ENCODE measurements at regions of chr17 and their contacts with region 1.

Region 1: DNA sequence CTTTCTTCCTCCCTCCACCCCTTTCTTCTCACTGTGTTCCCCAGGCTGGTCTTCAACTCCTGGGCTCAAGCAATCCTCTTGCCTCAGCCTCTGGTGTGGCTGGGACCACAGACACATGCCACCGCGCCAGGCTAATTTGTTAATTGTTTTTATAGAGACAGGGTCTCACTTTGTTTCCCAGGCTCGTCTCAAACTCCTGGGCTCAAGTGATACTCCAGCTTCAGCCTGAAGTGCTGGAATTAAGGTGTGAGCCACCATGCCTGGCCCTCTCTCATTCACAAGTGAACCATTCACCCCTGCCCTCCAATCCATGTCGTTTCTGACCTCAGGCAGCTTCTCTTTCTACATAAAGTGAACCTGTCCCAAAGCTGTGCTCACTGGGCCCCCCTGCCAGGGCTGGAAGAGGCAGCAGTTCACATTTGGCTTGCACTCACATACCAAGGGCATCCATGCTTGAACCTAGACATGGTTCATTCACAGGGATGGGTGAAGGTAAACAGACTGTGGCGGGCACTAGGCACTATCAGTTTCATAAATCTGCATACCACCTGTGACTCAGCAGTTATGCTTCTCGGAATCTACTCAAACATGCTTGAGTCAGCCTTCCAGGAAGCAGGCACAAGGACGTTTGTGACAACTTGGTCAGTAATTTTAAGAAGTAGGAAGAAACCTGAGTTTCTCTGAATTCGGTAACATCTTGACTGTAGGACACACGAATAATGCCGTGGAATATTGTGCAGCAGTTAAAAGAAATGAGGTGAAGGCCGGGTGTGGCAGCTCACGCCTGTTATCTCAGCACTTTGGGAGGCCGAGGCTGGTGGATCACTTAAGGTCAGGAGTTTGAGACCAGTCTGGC is 6.0 kb upstream of the RNF213 start:
- H3K4me3 Mint-ChIP-seq: peak overlapping the region; percentile 51
- H3K27ac Mint-ChIP-seq: peak overlapping the region; percentile 99
- H3K4me1 Mint-ChIP-seq: peaks cover 72% of the 10 kb centered on the region
- H3K27me3 Mint-ChIP-seq: no peaks in the 10 kb centered on the region

Region 2: DNA sequence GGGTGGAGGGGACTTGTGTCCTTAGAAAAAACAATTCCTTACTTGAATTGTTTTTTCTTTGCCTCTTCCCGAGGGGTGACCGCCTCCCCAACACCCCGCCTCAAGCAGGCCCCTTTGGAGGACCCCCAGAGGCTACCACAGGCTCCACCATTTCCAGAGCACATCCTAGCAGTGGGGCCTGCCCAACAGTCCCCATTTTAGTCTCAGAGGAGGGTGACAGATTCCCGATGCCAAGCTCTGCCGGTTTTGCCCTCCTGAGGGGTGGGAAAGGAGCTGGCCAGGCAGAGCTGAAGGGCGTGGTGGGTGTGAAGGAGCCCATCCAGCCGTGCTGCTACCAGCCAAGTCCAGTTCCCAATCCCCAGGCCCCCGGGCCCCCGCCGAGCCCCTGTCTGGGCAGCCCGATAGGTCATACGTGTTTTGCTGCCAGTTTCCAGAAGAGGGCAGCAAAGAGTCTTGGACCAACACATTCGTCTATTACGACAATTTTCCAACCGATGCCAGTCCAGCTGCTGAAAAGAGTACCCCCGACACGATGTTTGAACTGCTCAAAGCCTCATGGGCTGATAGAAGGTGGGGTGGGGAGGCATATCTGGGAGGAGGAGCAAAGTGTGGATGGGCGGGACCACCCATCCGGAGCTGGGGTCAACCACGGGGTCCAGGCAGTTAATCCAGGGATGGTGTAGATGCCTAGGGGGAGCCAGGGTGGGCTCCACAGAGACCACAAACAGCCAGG is 172.1 kb before region 1 on chr17:
- intact Hi-C with region 1: loop called (anchors 10 kb)
- H3K4me3 Mint-ChIP-seq: no peak overlapping the region
- H3K27ac Mint-ChIP-seq: peak overlapping the region; percentile 69
- H3K4me1 Mint-ChIP-seq: peaks cover 10% of the 10 kb centered on the region
- H3K27me3 Mint-ChIP-seq: peaks cover 19% of the 10 kb centered on the region

Region 3: DNA sequence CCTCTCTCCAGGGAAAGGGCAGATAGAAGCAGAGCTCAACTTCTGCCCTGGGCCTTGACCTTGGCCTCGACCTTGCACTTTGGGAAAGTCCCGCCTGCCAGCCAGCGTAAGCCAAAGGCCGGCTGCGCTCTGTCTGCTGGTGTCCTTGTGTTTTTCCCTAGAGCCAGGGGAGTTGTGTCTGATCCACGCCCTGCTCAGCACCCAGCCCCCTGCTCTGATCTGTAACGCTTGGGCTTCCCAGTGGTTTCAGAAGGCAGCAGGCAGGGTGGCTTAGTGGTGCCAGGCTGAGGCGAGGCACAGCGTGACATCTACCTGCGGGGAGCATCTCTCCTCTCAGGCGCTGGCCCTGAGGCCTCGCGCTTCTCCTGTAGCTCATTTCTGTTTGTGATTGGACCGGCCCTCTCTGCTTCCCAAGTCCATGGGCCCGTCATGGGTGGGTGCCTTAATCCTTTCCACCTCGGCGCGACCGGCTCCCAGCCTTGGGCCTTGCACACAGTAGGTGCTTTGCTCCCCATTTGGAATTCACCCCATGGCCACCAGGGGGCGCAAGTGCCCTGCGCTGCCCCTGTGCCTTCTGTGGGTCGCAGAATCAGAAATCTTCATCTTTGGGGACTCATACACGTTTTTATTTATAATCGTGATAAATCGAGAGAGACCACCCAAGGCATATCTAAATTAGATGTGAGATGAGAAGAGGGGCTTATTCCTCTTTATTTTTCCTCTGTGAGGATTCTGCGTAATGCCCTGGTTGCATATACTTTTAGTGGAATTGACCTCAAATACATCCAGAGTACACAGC is 58.7 kb before region 1 on chr17:
- intact Hi-C with region 1: loop called (anchors 5 kb)
- H3K4me3 Mint-ChIP-seq: no peak overlapping the region
- H3K27ac Mint-ChIP-seq: no peak overlapping the region
- H3K4me1 Mint-ChIP-seq: peaks cover 19% of the 10 kb centered on the region
- H3K27me3 Mint-ChIP-seq: peaks cover 34% of the 10 kb centered on the region

Region 4: DNA sequence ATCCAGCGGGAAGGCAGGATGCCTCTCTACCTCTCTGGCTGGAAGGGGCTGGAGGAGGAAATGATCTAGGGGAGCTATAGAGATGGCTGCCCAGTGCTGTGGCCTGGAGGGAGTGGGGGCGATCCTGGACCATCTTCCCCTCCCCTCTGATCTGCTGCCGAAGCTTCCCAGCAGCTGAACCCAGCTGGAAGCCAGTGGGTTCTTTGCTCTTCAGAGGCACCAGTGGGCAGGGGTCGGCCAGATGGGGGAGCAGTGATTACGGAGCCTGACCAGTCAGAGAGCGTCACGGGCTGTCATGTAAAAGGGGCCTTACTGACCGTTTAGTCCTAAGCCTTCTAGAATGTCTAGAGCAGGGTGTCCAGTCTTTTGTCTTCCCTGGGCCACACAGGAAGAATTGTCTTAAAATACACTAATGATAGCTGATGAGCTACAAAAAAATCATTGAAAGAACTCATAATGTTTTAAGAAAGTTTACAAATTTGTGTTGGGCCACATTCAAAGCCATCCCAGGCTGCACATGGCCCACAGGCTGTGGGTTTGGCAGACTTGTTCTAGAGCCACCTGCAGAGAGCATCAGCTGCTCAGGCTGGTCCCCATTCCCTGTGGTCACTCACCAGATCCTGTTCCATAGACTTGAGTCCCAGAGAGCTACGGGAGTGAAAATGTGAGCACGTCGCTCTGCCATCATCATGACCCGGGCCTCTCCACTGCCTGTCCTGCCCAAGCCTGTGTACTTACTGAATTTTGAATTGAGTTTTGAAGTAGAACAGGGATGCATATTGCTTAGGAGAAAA is 27.7 kb before region 1 on chr17:
- intact Hi-C with region 1: no loop called
- H3K4me3 Mint-ChIP-seq: no peak overlapping the region
- H3K27ac Mint-ChIP-seq: no peak overlapping the region
- H3K4me1 Mint-ChIP-seq: peaks cover 22% of the 10 kb centered on the region
- H3K27me3 Mint-ChIP-seq: peaks cover 26% of the 10 kb centered on the region

Region 5: DNA sequence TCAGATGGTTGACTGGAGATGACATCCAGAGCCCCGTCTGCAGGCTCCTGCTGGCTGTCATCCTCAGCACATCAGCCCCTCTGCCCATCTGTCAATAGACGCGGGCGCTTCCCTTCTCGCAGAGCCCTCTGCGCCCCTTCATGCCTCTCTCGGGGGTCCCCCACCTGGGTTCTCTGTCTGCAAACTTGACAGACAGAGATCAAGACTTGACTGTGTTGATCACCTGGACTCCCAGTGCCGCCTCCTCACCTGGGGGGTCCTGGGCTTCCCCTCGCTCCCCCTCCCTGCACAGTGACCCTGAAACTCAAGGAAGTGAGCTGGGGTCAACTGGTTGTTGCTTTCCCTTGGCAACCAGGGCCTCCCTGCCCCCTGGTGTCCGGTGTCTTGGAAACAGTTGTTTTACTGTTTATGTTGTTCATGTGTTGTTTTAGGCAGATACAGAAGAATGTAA is 37.9 kb after region 1 on chr17:
- intact Hi-C with region 1: no loop called
- H3K4me3 Mint-ChIP-seq: no peak overlapping the region
- H3K27ac Mint-ChIP-seq: peak overlapping the region; percentile 43
- H3K4me1 Mint-ChIP-seq: peaks cover 49% of the 10 kb centered on the region
- H3K27me3 Mint-ChIP-seq: no peaks in the 10 kb centered on the region

Region 6: GRCh38 chr17:80361495-80362220 is 107.0 kb after region 1 on chr17:
- intact Hi-C with region 1: no loop called
- H3K4me3 Mint-ChIP-seq: no peak overlapping the region
- H3K27ac Mint-ChIP-seq: no peak overlapping the region
- H3K4me1 Mint-ChIP-seq: no peaks in the 10 kb centered on the region
- H3K27me3 Mint-ChIP-seq: no peaks in the 10 kb centered on the region